HAP-1 (cell line): ENCODE measurements at regions of chr18 and their contacts with region 1.

Region 1: DNA sequence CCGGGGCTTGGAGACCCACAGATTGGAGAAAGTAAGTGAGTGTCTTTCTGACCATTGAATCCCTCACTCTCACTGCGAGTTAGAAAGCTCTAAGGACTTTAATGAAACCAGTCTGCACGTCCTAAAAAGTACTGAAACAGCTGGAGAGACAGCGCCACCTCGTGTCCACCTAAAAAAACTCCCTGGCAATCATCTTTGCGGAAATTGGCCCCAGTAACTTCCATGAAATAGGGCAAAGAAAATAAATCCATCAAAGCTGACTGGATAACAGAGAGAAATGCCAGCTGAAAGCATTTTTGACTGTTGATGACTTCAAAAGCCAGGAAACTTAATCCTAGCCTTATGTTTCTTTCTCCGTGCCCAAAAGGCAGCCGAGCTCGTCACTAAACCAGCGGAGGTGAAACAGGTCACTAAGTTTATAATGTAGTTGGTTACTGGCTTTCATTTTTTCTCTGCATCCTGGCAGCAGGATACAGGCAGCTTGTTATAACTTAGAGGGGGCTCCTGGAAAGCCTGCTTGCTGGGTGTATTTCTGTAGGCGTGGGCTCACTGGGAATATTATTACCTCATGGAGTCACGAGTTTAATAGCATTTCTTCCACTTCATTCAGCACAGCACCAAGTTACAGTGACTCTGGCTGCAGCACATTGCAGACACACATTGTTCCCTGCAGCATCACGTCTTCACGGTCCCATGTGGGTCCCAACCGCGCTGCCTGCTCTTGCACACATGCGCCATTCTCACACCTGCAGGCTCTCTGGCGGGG is 266.5 kb downstream of the HRH4 start:
- DNase-seq: peak; percentile 53 to 75
- H3K4me3 ChIP-seq: no peak overlapping the region
- H3K4me1 ChIP-seq: no peaks in the 10 kb centered on the region
- H3K27me3 ChIP-seq: peaks cover 5% of the 10 kb centered on the region

Region 2: GRCh38 chr18:24368749-24369148 is 358.2 kb before region 1 on chr18:
- in situ Hi-C with region 1: loop called (anchors 25 kb)
- DNase-seq: no peak
- H3K4me3 ChIP-seq: no peak overlapping the region
- H3K4me1 ChIP-seq: no peaks in the 10 kb centered on the region
- H3K27me3 ChIP-seq: no peaks in the 10 kb centered on the region

Region 3: GRCh38 chr18:24595561-24596031 is 131.3 kb before region 1 on chr18:
- in situ Hi-C with region 1: loop called (anchors 10 kb)
- DNase-seq: no peak
- H3K4me3 ChIP-seq: no peak overlapping the region
- H3K4me1 ChIP-seq: no peaks in the 10 kb centered on the region
- H3K27me3 ChIP-seq: no peaks in the 10 kb centered on the region

Region 4: GRCh38 chr18:25019086-25019860 is 292.4 kb after region 1 on chr18:
- in situ Hi-C with region 1: no loop called
- DNase-seq: no peak
- H3K4me3 ChIP-seq: no peak overlapping the region
- H3K4me1 ChIP-seq: no peaks in the 10 kb centered on the region
- H3K27me3 ChIP-seq: no peaks in the 10 kb centered on the region